Activated naive CD8-positive, alpha-beta T cell treated with anti-CD3 and anti-CD28 coated beads, Interleukin-2, amount 10 ng/mL, durations not matched to agents 7 days and 5 days (primary cell): ENCODE measurements at regions of chr7 and their contacts with region 1.

Region 1: DNA sequence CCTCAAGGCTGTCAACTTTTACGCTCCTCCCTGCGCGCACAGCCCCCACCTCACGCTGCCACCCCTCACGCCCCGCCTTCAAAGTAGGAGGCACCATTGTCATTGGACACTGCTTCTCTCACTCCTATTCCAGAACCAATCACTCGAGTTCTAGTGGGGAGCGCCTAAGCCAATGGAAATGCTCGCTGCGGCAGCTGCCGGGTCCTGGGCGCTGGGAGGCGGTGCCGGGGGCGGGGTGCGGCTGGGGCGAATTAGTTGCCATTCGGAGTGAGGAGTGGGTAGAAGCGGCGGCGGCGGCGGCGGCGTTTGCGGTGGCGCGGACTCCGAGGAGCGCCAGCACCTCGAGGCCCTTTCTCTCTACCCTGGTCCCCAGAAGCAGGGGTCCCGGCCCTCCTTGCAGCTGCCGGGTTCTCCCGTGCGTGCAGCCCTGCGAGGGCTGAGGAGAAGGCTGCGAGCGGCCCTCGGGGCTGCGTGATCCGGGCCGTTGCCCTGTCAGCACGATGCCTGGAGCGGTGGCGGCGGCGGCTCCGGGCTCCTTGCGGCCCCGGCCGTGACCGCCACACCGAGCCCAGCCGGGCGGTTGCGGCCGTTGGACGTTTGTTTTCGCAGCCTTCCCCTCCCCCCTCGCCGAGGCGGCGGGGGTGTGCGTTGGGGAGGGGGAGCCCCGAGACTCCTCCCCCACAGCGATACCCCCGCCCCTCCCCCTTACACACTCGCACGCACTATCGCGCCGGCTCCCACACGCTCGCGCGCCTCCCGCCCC is at the start of gene GLCCI1:
- DNase-seq: peak; percentile 94
- ATAC-seq: peak; percentile 94
- H3K4me3 Mint-ChIP-seq: peak within 1 kb of the TSS; percentile 92
- H3K27ac Mint-ChIP-seq: peak within 1 kb of the TSS; percentile 96
- H3K4me1 Mint-ChIP-seq: peaks cover 16% of the 10 kb centered on the region
- H3K27me3 Mint-ChIP-seq: no peaks in the 10 kb centered on the region
- total RNA-seq, gene GLCCI1: 30.0 to 38.1 TPM

Region 2: DNA sequence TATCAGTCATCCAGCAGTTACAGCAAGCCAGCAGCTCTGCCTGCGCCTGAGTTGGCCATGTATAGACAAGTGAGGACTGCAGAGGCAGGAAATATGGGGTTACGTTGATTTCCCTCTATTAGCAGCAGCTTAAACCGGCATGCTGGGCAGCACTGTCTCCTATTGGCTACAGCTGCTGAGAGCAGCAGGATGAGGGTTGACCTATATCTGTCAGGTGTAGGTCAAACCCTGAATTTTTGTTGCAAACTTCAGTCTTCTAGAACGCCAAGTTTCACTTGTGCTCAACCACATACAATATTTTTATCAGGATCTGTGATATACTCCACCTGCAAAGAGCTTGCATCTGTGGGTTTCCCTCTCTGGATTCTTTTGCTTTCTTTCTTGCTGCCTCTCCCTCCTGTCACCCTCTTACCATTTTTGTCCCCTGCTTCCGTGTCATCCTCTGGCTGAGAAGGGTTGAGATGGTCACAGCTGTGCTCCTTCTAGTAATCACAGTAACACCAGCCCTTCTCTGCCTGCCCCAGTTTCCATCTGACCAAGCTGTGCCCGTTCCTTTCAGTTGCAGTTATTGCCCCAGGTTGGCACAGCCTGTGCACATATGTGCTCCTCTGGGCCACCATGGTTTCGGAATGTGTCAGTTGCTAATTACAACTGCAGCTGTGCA is 24.0 kb before region 1 on chr7:
- POLR2A ChIA-PET with region 1: interaction called, 19 read pairs
- DNase-seq: peak; percentile 50
- ATAC-seq: peak; percentile 98
- H3K4me3 Mint-ChIP-seq: peak overlapping the region; percentile 68
- H3K27ac Mint-ChIP-seq: peak overlapping the region; percentile 91
- H3K4me1 Mint-ChIP-seq: peaks cover 17% of the 10 kb centered on the region
- H3K27me3 Mint-ChIP-seq: no peaks in the 10 kb centered on the region

Region 3: GRCh38 chr7:8125680-8126444 is 157.1 kb after region 1 on chr7:
- POLR2A ChIA-PET with region 1: interaction called, 26 read pairs
- DNase-seq: peak; percentile 74
- ATAC-seq: peak; percentile 97
- H3K4me3 Mint-ChIP-seq: peak overlapping the region; percentile 68
- H3K27ac Mint-ChIP-seq: peak overlapping the region; percentile 99
- H3K4me1 Mint-ChIP-seq: peaks cover 40% of the 10 kb centered on the region
- H3K27me3 Mint-ChIP-seq: peaks cover 4% of the 10 kb centered on the region

Region 4: GRCh38 chr7:8176370-8177081 is 207.8 kb after region 1 on chr7:
- POLR2A ChIA-PET with region 1: interaction called, 30 read pairs
- DNase-seq: no peak
- ATAC-seq: peak; percentile 97
- H3K4me3 Mint-ChIP-seq: peak overlapping the region; percentile 68
- H3K27ac Mint-ChIP-seq: peak overlapping the region; percentile 98
- H3K4me1 Mint-ChIP-seq: peaks cover 43% of the 10 kb centered on the region
- H3K27me3 Mint-ChIP-seq: no peaks in the 10 kb centered on the region

Region 5: DNA sequence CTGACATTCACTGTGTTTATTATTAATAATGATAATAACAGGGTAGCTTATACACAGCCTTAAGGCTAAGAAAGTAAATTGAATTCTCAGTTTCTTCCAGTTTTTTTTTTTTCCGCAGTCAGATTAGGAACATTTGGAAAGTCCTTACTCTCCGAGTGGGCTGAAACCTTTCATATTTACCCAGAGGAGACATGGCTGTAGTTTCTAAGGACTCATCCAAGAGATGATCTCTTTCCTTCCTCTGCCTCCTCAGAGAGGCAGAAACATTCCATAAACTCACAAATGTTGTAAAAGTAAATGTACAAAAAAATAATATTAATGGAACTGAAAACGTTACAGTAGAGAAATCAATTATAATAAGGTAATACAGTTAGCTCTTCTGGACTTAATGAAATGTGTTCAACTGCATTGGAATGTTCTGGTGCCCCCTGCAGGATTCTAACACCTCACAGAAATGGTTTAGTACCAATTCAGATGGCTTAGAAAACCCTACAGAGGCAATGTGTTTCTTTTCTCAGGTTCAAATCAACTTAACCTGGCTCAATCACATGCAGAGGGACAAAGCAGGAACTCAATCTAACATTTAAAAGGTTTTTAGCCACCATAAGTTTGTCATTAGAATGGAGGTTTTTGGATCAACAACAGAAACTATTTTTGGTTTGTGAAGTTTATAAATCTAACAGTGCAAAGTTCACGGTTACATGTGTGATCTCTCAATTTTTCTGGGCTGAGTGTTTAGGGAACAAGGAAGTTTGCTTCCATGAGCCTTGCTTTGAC is 221.6 kb after region 1 on chr7:
- POLR2A ChIA-PET with region 1: interaction called, 11 read pairs
- DNase-seq: no peak
- ATAC-seq: peak; percentile 78
- H3K4me3 Mint-ChIP-seq: no peak overlapping the region
- H3K27ac Mint-ChIP-seq: no peak overlapping the region
- H3K4me1 Mint-ChIP-seq: peaks cover 18% of the 10 kb centered on the region
- H3K27me3 Mint-ChIP-seq: peaks cover 14% of the 10 kb centered on the region